Panc1 (cell line): ENCODE measurements at regions of chr16 and their contacts with region 1.

Region 1: GRCh38 chr16:79601931-79602627 is 1.5 kb upstream of the MAF start:
- DNase-seq: peak; percentile 30
- ATAC-seq: no peak
- H3K4me3 ChIP-seq: peak overlapping the region in 1 of 2 experiments; percentile 52; a peak in 1 of 4 replicates
- H3K27ac ChIP-seq: no peak overlapping the region
- H3K4me1 ChIP-seq: peaks cover 4% of the 10 kb centered on the region; the same call in 1 of the 2 replicates
- H3K27me3 ChIP-seq: peaks cover 14% of the 10 kb centered on the region
- CTCF ChIP-seq: peak; percentile 77

Region 2: DNA sequence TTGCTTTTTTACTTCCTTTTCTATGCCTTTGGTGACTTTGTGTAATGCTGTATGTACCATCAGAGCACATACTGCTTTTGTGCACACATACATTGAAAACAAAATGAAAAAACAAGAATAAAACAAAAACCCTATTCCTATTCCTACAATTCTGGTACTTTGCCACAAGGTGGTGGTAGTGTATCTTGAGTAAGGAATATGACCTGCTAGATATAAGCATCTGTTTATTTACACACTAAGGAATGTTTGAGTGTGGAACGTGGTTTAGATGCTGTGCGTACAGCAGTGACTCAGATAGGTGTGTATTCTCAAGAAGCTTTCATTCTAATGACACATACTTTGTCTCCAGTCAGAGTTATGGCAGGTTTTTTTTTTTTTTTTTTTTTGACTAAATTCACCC is 896.4 kb before region 1 on chr16:
- CTCF ChIA-PET with region 1: interaction called, 3 read pairs
- POLR2A ChIA-PET with region 1: no interaction called
- in situ Hi-C with region 1: no loop called
- intact Hi-C with region 1: loop called (anchors 5 kb)
- DNase-seq: peak; percentile 2
- ATAC-seq: no peak
- H3K4me3 ChIP-seq: no peak overlapping the region
- H3K27ac ChIP-seq: no peak overlapping the region
- H3K4me1 ChIP-seq: no peaks in the 10 kb centered on the region
- H3K27me3 ChIP-seq: no peaks in the 10 kb centered on the region
- CTCF ChIP-seq: peak; percentile 42; the same call in 1 of the 2 replicates

Region 3: GRCh38 chr16:79573884-79574283 is 28.2 kb before region 1 on chr16:
- CTCF ChIA-PET with region 1: no interaction called
- POLR2A ChIA-PET with region 1: no interaction called
- in situ Hi-C with region 1: no loop called
- intact Hi-C with region 1: no loop called
- DNase-seq: no peak
- ATAC-seq: no peak
- H3K4me3 ChIP-seq: no peak overlapping the region
- H3K27ac ChIP-seq: no peak overlapping the region
- H3K4me1 ChIP-seq: no peaks in the 10 kb centered on the region
- H3K27me3 ChIP-seq: peaks cover 2% of the 10 kb centered on the region
- CTCF ChIP-seq: no peak